ENCODE measurements at regions of chr16 and their contacts with region 1.

Region 1: GRCh38 chr16:3023669-3024478 is at the starts of genes HCFC1R1 and THOC6:
- DNase-seq: peak; percentile 98
- H3K4me3 Mint-ChIP-seq: peak within 1 kb of the TSS; percentile 82
- H3K27ac Mint-ChIP-seq: peak within 1 kb of the TSS; percentile 94
- H3K4me1 Mint-ChIP-seq: peaks cover 23% of the 10 kb centered on the region
- H3K27me3 Mint-ChIP-seq: no peaks in the 10 kb centered on the region
- CTCF ChIP-seq: no peak
- total RNA-seq, gene HCFC1R1: 13.6 and 20.4 TPM in 2 replicates
- total RNA-seq, gene THOC6: 36.8 and 53.1 TPM in 2 replicates

Region 2: GRCh38 chr16:2980227-2981086 is 43.4 kb before region 1 on chr16 and contains the start of gene PKMYT1:
- CTCF ChIA-PET with region 1: interaction called, 4 read pairs
- POLR2A ChIA-PET with region 1: interaction called, 17 read pairs
- intact Hi-C with region 1: loop called (anchors 1 kb)
- DNase-seq: peak; percentile 87
- H3K4me3 Mint-ChIP-seq: peak within 1 kb of the TSS; percentile 73
- H3K27ac Mint-ChIP-seq: no peak within 1 kb of the TSS
- H3K4me1 Mint-ChIP-seq: peaks cover 6% of the 10 kb centered on the region
- H3K27me3 Mint-ChIP-seq: no peaks in the 10 kb centered on the region
- CTCF ChIP-seq: no peak
- total RNA-seq, gene PKMYT1: 16.9 and 34.7 TPM in 2 replicates

Region 3: DNA sequence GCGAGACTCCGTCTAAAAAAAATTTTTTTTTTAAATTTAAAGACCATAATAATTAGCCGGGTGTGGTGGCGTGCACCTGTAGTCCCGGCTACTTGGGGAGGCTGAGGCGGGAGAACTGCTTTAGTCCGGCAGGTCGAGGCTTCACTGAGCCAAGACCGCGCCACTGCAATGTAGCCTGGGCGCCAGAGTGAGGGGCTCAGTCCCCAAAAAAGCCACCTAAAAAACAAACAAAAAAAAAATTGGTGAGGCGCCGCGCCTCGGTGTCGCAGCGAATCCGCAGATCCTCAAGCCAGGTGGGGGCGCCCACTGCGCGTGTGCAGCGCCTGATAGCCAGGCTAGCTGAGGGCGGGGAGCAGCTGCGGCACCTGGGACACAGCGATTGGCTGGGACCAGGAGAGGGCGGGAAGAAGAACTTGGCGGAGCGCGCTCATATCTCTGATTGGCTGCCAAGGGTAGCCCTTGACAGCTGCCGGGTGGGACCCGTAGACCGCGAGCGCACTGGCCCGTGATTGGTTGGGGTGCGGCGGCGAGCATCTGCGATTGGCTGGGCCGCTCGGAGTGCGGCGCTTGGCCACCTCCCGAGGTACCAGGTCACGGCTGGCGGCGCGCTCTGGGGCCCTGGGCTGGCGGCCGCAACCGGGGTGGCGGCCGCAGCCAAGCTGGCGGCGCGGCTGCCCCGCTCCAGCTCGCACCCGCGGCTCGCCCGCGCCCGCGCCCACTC is 20.1 kb before region 1 on chr16:
- CTCF ChIA-PET with region 1: interaction called, 121 read pairs
- POLR2A ChIA-PET with region 1: interaction called, 41 read pairs
- intact Hi-C with region 1: loop called (anchors 1 kb)
- DNase-seq: peak; percentile 99
- H3K4me3 Mint-ChIP-seq: peak overlapping the region; percentile 60
- H3K27ac Mint-ChIP-seq: no peak overlapping the region
- H3K4me1 Mint-ChIP-seq: no peaks in the 10 kb centered on the region
- H3K27me3 Mint-ChIP-seq: no peaks in the 10 kb centered on the region
- CTCF ChIP-seq: peak; percentile 33

Region 4: DNA sequence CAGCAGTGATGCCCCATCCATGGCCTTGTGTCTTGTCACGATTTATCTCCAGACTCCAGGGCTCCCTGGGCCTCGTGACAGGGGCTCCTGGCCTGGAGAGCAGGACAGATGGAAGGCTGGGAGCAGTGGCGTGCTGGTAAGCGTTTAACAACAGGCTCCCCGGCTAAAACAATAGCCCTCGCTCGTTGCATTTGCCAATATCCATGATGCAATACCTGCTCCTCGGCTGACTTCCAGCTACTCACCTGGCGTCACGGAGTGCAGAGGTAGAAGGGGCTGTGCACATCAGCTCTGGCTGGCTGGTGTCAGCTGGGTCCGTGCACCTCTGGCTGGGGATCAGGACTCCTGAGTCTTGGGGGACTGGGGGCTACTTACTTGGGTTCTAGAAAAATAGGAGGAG is 14.4 kb after region 1 on chr16:
- CTCF ChIA-PET with region 1: interaction called, 23 read pairs
- POLR2A ChIA-PET with region 1: interaction called, 15 read pairs
- intact Hi-C with region 1: no loop called
- DNase-seq: peak; percentile 87
- H3K4me3 Mint-ChIP-seq: no peak overlapping the region
- H3K27ac Mint-ChIP-seq: no peak overlapping the region
- H3K4me1 Mint-ChIP-seq: no peaks in the 10 kb centered on the region
- H3K27me3 Mint-ChIP-seq: peaks cover 52% of the 10 kb centered on the region
- CTCF ChIP-seq: no peak

Region 5: DNA sequence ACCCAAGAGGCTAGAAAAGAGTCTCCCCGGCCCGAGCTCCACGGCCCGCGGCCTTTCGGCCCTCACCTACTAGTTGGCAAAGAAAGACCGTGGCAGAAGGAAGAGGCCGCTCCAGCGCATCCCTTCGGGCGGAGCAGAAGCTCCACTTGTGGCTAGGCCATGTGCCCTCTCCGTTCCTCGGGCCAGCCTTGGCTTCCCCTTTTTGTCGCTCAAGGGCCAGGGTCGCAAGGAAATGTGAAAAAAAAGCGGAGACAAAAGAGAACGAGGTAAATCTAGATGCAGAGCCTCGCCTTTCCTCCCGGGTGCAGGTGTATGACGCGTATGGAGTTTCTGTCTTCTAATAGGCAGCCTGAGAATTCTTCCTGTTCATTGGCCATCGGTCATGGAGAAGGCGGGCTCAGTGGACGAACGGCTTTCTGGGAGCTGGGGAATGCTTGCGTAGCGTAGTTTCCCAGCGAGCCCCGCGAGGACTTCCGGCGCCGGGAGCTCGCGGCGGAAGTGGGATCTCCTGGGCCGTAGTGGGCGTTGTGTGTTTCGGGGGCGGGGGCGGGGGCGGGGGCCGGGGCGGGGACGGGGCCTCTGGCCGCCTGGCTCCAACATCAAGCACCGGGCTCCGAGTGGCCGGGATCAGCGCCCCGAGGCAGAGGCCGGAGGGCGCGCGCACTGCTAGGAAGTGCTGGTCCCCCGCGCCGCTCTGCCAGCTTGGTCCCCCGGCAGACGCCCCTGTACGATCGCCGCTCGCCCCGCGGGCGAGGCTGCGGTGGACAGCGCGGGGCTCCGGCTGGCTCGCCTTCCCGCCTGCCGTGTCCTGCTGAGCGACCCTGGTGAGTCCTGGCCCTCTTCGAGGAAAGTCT is 110.9 kb after region 1 on chr16 and contains the start of gene ZNF213:
- CTCF ChIA-PET with region 1: interaction called, 8 read pairs
- POLR2A ChIA-PET with region 1: interaction called, 30 read pairs
- intact Hi-C with region 1: no loop called
- DNase-seq: peak; percentile 99
- H3K4me3 Mint-ChIP-seq: peak within 1 kb of the TSS; percentile 93
- H3K27ac Mint-ChIP-seq: peak within 1 kb of the TSS; percentile 95
- H3K4me1 Mint-ChIP-seq: peaks cover 1% of the 10 kb centered on the region
- H3K27me3 Mint-ChIP-seq: no peaks in the 10 kb centered on the region
- CTCF ChIP-seq: no peak
- total RNA-seq, gene ZNF213: 19.7 and 20.7 TPM in 2 replicates